ENCODE measurements at regions of chr22 and their contacts with region 1.

Region 1: GRCh38 chr22:30054588-30055033 is 25.7 kb upstream of the HORMAD2 start:
- DNase-seq: peak; percentile 75 to 81
- H3K4me3 ChIP-seq: no peak overlapping the region
- H3K4me3 Mint-ChIP-seq: peak overlapping the region; percentile 35
- H3K27ac Mint-ChIP-seq: peak overlapping the region; percentile 64
- H3K4me1 ChIP-seq: peaks cover 21% of the 10 kb centered on the region
- H3K4me1 Mint-ChIP-seq: peaks cover 28% of the 10 kb centered on the region
- H3K27me3 ChIP-seq: no peaks in the 10 kb centered on the region
- H3K27me3 Mint-ChIP-seq: no peaks in the 10 kb centered on the region
- CTCF ChIP-seq: no peak

Region 2: DNA sequence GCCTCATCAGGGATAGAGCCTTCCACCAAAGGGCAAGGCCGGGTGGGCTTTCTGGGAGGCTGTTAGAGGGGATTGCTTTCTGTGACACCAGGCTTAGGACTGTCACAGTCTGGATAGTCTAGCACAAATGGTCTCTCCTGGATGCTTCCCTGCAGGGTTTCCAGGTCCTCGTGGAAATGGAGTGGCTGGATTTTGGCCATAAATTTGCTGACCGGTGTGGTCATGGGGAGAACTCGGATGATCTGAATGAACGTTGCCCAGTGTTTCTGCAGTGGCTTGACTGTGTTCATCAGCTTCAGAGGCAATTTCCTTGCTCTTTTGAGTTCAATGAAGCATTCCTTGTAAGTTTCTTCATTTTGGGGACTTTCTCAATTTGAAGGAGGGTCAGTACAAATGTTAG is 41.4 kb before region 1 on chr22:
- CTCF ChIA-PET with region 1: no interaction called
- POLR2A ChIA-PET with region 1: no interaction called
- intact Hi-C with region 1: loop called (anchors 1 kb)
- DNase-seq: no peak
- H3K4me3 ChIP-seq: no peak overlapping the region
- H3K4me3 Mint-ChIP-seq: no peak overlapping the region
- H3K27ac Mint-ChIP-seq: no peak overlapping the region
- H3K4me1 ChIP-seq: peaks cover 10% of the 10 kb centered on the region; the same call in 1 of the 2 replicates
- H3K4me1 Mint-ChIP-seq: no peaks in the 10 kb centered on the region
- H3K27me3 ChIP-seq: no peaks in the 10 kb centered on the region
- H3K27me3 Mint-ChIP-seq: no peaks in the 10 kb centered on the region
- CTCF ChIP-seq: no peak

Region 3: DNA sequence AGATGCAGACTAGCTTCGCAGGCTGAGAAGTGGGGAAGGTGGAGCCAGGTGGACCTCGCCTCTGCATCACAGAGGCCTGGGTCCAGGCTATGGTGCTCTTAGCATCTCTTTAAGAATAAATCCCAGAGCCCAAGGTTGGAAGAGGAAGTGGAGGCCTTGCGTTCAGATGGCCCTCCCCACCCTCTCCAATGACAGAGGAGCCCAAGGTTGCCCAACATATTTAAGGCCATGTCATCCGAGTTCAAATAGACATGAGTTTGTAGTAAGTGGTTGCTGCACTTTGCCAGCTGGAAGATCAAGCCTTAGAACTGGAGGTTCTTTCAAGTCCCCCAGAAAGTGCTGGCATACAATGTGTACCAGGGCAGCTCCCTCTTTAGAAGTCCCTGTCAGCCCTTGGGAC is 21.5 kb before region 1 on chr22:
- CTCF ChIA-PET with region 1: no interaction called
- POLR2A ChIA-PET with region 1: no interaction called
- intact Hi-C with region 1: no loop called
- DNase-seq: no peak
- H3K4me3 ChIP-seq: no peak overlapping the region
- H3K4me3 Mint-ChIP-seq: no peak overlapping the region
- H3K27ac Mint-ChIP-seq: no peak overlapping the region
- H3K4me1 ChIP-seq: peaks cover 9% of the 10 kb centered on the region
- H3K4me1 Mint-ChIP-seq: peaks cover 17% of the 10 kb centered on the region
- H3K27me3 ChIP-seq: no peaks in the 10 kb centered on the region
- H3K27me3 Mint-ChIP-seq: no peaks in the 10 kb centered on the region
- CTCF ChIP-seq: no peak

Region 4: GRCh38 chr22:30079952-30080533 is 25.4 kb after region 1 on chr22 and contains the start of gene HORMAD2:
- CTCF ChIA-PET with region 1: interaction called, 16 read pairs
- POLR2A ChIA-PET with region 1: interaction called, 5 read pairs
- intact Hi-C with region 1: loop called (anchors 1 kb)
- DNase-seq: no peak
- H3K4me3 ChIP-seq: no peak within 1 kb of the TSS
- H3K4me3 Mint-ChIP-seq: no peak within 1 kb of the TSS
- H3K27ac Mint-ChIP-seq: no peak within 1 kb of the TSS
- H3K4me1 ChIP-seq: peaks cover 27% of the 10 kb centered on the region
- H3K4me1 Mint-ChIP-seq: peaks cover 27% of the 10 kb centered on the region
- H3K27me3 ChIP-seq: no peaks in the 10 kb centered on the region
- H3K27me3 Mint-ChIP-seq: no peaks in the 10 kb centered on the region
- CTCF ChIP-seq: no peak
- total RNA-seq, gene HORMAD2: 2.4 and 3.1 TPM in 2 replicates

Region 5: DNA sequence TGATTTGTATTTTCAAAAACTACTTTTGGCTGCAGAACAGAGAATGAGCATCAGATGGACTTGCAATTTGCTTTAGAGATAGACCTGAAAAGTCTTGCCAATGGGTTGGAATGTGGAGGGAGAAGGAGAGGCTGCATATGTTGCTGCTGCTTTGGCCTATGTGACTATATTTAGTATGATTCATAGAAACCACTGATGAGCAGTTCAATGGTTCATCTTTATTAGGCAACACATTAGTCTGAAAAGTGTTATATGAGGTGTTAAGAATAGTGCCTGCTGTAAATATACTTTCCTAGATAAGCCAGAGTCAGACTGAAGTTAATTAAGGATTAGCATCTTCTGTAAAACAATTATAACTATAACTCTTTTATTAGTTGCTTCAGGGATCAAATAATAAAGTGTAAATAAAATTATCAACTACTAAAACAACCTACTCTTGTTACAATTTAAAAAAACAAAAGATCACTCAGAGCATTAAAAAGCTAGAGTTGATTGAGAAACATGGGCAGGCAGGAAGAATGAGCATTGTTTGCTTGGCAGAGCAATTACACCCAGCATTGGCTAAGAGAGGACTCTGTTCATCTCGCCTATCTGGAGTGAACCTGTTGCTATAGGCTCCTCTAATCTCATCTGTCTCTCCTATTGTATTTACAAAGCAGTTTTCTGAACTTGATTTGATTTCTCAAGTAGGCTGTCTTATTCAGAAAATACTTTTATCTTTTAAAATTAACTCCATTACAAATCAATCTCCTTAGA is 61.9 kb after region 1 on chr22:
- CTCF ChIA-PET with region 1: no interaction called
- POLR2A ChIA-PET with region 1: no interaction called
- intact Hi-C with region 1: no loop called
- DNase-seq: no peak
- H3K4me3 ChIP-seq: no peak overlapping the region
- H3K4me3 Mint-ChIP-seq: no peak overlapping the region
- H3K27ac Mint-ChIP-seq: no peak overlapping the region
- H3K4me1 ChIP-seq: no peaks in the 10 kb centered on the region; the same call in 1 of the 2 replicates
- H3K4me1 Mint-ChIP-seq: no peaks in the 10 kb centered on the region
- H3K27me3 ChIP-seq: no peaks in the 10 kb centered on the region
- H3K27me3 Mint-ChIP-seq: no peaks in the 10 kb centered on the region
- CTCF ChIP-seq: no peak

Measured in Caco-2 (cell line).